ENCODE measurements at regions of chr1 and their contacts with region 1.

Region 1: GRCh38 chr1:246566128-246566812 is at the starts of genes CNST and TFB2M:
- DNase-seq: peak; percentile 96
- H3K4me3 Mint-ChIP-seq: peak within 1 kb of the TSS; percentile 96
- H3K27ac Mint-ChIP-seq: peak within 1 kb of the TSS; percentile 94
- H3K4me1 Mint-ChIP-seq: peaks cover 43% of the 10 kb centered on the region
- H3K27me3 Mint-ChIP-seq: no peaks in the 10 kb centered on the region
- total RNA-seq, gene CNST: 22.1 to 25.3 TPM
- total RNA-seq, gene TFB2M: 10.8 to 11.1 TPM

Region 2: DNA sequence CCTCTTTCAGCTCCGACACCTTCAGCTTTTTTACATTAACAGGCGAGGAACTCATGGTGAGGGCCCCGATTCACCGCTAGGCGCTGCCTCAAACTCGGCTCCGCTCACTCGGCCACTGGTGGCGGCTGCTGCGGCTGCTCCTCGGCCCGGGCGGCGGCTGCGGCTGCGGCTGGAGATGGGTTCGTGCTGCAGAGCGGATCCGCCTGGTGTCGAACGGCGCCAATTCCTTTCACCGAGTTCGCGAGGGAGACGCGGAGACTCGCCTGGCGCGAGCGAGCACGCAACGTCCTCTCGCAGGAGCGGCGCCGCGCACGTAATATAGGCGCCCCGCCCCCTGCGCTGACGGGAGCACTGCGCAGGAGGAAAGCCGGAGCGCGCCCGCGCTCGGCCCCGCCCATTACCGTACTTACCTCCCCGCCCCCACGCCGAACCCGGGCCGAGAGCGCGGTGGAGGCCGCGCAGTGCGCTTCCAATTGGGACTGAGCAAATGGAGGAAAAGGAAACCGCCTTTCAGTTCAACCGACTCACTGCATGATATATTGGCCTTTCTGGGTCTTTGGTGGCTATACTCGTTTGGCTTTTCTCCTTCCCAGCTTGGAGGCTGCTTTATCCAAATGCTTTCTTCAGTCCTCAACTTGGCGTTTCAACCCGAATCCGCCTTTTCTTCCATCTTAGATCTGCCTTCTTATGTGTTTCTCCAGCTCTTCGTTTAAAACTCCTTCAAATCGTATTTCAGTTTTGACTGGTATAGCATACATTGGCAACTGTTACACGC is 1701.8 kb before region 1 on chr1 and contains the start of gene HNRNPU:
- CTCF ChIA-PET with region 1: no interaction called
- intact Hi-C with region 1: loop called (anchors 2 kb)
- DNase-seq: peak; percentile 95
- H3K4me3 Mint-ChIP-seq: peak within 1 kb of the TSS; percentile 90
- H3K27ac Mint-ChIP-seq: peak within 1 kb of the TSS; percentile 99
- H3K4me1 Mint-ChIP-seq: peaks cover 31% of the 10 kb centered on the region
- H3K27me3 Mint-ChIP-seq: no peaks in the 10 kb centered on the region
- total RNA-seq, gene HNRNPU: 331 to 338 TPM

Region 3: GRCh38 chr1:246295968-246296367 is 270.3 kb before region 1 on chr1:
- CTCF ChIA-PET with region 1: no interaction called
- intact Hi-C with region 1: no loop called
- DNase-seq: no peak
- H3K4me3 Mint-ChIP-seq: no peak overlapping the region
- H3K27ac Mint-ChIP-seq: no peak overlapping the region
- H3K4me1 Mint-ChIP-seq: peaks cover 5% of the 10 kb centered on the region
- H3K27me3 Mint-ChIP-seq: no peaks in the 10 kb centered on the region

Region 4: DNA sequence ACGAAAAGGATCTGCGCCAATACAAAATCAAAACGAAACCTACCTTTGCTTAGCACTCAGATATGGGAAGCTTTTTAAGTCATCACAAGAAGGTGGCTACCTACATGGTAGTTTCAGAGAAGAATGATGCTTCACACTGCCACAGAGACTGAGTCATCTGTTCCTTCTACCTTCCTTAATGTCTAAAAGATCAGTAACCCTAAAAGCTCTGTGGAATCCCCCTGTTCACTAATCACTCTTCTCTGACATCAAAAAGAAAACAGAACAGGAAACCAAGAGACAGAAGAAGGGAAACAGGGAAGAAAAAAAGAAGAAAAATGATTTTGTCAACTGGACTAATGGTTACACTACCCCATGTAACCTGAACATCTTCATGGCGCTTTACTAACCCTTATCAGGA is 236.4 kb before region 1 on chr1:
- CTCF ChIA-PET with region 1: no interaction called
- intact Hi-C with region 1: loop called (anchors 5 kb)
- DNase-seq: peak; percentile 65
- H3K4me3 Mint-ChIP-seq: no peak overlapping the region
- H3K27ac Mint-ChIP-seq: peak overlapping the region; percentile 67
- H3K4me1 Mint-ChIP-seq: peaks cover 54% of the 10 kb centered on the region
- H3K27me3 Mint-ChIP-seq: no peaks in the 10 kb centered on the region

Region 5: DNA sequence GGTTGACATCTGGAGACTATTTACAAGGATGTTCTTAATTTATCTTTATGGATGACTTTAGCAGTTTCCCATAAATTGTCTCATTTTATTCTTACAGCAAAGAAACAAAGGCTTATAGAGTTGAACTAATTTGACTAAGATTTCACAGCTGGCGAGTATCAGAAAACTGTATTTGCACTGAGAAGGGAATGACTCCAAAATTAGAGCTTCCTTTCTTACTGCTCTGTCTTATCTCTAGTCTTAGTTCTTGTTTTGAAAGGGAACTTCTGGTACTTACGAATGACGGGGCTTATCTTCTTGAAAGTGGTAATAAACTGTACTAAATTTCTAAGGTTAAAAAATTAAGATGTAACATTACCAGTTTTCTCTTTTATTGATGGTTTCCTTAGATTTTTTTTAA is 13.5 kb after region 1 on chr1:
- CTCF ChIA-PET with region 1: interaction called, 11 read pairs
- intact Hi-C with region 1: loop called (anchors 1 kb)
- DNase-seq: no peak
- H3K4me3 Mint-ChIP-seq: no peak overlapping the region
- H3K27ac Mint-ChIP-seq: peak overlapping the region; percentile 51
- H3K4me1 Mint-ChIP-seq: peaks cover 72% of the 10 kb centered on the region
- H3K27me3 Mint-ChIP-seq: no peaks in the 10 kb centered on the region

Region 6: GRCh38 chr1:246699095-246699735 is 132.9 kb after region 1 on chr1:
- CTCF ChIA-PET with region 1: no interaction called
- intact Hi-C with region 1: loop called (anchors 1 kb)
- DNase-seq: peak; percentile 93
- H3K4me3 Mint-ChIP-seq: peak overlapping the region; percentile 32
- H3K27ac Mint-ChIP-seq: peak overlapping the region; percentile 30
- H3K4me1 Mint-ChIP-seq: peaks cover 2% of the 10 kb centered on the region
- H3K27me3 Mint-ChIP-seq: peaks cover 6% of the 10 kb centered on the region

Region 7: GRCh38 chr1:247103859-247104591 is 537.8 kb after region 1 on chr1 and contains the start of gene ZNF669:
- CTCF ChIA-PET with region 1: no interaction called
- intact Hi-C with region 1: loop called (anchors 5 kb)
- DNase-seq: peak; percentile 97
- H3K4me3 Mint-ChIP-seq: peak within 1 kb of the TSS; percentile 88
- H3K27ac Mint-ChIP-seq: peak within 1 kb of the TSS; percentile 90
- H3K4me1 Mint-ChIP-seq: peaks cover 17% of the 10 kb centered on the region
- H3K27me3 Mint-ChIP-seq: peaks cover 12% of the 10 kb centered on the region
- total RNA-seq, gene ZNF669: 8.2 to 8.4 TPM